Activated T-helper 1 cell treated with anti-CD3 and anti-CD28 coated beads, Interleukin-12 subunit alpha, Interleukin-12 subunit beta, Interleukin-2, Interleukin-4 antibody, amounts not matched to agents 30 ng/mL and 10 ng/mL and 1 ng/mL, durations not matched to agents 14 hours and 24 hours and 36 hours (primary cell): ENCODE measurements at regions of chr1 and their contacts with region 1.

Region 1: DNA sequence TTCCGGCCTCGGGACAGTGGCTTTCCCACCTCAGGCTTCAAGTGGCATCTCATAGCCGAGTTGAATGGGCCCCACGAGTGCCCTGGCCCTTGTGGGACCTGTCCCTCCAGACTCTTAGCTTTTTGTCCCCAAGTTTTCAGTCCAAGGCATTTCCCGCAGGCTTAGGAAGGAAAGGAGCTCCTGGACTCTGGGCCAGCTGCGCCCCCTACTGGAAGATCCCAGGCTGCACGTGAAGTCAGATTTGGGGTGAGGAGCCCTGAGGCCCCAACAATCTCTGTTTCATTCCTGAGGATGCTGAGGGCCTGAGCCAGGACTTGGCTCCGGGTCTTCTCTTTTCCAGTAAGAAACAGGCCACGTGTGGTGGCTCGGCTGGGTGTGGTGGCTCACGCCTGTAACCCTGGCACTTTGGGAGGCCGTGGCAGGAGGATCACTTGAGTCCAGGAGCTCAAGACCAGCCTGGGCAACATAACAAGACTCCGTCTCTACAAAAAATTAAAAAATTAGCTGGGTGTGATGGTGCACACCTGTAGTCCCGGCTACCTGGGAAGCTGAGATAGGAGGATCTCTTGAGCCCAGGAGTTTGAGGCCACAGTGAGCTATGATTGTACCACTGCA is 67.4 kb downstream of the ARHGEF10L start:
- DNase-seq: peak; percentile 13
- H3K4me3 Mint-ChIP-seq: no peak overlapping the region
- H3K27ac Mint-ChIP-seq: no peak overlapping the region
- H3K4me1 Mint-ChIP-seq: no peaks in the 10 kb centered on the region
- H3K27me3 Mint-ChIP-seq: no peaks in the 10 kb centered on the region

Region 2: DNA sequence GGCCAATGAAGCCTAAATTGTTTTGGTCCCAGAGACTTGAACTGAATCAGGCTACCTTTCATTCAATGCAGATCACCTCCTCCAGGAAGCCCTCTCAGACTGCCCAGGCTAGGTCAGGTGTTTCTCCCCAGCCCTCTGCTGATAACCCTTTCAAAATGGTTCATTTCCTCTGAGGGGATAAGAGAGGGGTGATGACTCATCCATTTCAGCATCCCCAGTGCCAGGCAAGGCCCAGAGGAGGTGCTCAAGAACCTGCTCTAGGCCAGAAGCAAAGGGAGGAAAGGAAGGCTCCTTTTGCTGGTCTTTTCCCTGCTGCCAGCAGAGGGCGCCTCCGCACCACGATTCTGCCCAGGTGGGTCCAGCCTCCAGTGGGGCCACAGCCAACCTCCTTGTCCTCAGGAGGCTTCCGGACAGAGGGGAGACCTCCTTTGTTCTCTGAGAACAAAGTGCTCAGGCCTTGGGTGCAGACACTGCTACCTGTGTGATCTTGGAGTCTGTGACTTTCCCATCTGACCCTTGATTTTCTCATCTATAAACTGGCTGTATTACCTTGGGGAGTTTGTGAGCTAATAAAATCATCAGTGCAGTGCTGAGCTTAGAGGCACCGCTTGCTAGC is 112.7 kb before region 1 on chr1:
- intact Hi-C with region 1: loop called (anchors 2 kb)
- DNase-seq: peak; percentile 45
- H3K4me3 Mint-ChIP-seq: no peak overlapping the region
- H3K27ac Mint-ChIP-seq: no peak overlapping the region
- H3K4me1 Mint-ChIP-seq: no peaks in the 10 kb centered on the region
- H3K27me3 Mint-ChIP-seq: no peaks in the 10 kb centered on the region

Region 3: DNA sequence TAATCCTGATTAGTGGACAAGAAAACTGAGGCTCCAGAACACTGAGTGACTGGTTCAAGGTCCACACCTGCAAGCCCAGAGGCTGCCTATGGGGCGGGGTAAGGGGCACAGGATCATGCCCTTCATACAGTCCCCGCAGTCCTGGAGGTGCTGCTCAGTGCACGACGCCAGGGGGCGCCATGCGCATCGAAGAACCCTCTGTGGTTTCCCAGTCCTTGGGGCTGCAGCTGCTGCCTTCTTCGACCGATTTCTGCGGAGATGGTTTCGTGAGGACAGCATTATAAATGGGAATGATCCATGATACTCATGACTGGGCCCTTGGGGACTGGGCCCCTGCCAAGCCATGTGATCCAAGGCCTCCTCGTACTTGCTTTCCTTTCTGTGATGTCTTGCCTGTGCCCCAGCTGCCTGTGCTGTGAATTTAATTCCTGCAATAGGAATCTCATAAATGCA is 104.6 kb before region 1 on chr1:
- intact Hi-C with region 1: loop called (anchors 1 kb)
- DNase-seq: peak; percentile 37
- H3K4me3 Mint-ChIP-seq: no peak overlapping the region
- H3K27ac Mint-ChIP-seq: no peak overlapping the region
- H3K4me1 Mint-ChIP-seq: no peaks in the 10 kb centered on the region
- H3K27me3 Mint-ChIP-seq: peaks cover 2% of the 10 kb centered on the region

Region 4: GRCh38 chr1:17540255-17541001 is 66.5 kb before region 1 on chr1:
- intact Hi-C with region 1: no loop called
- DNase-seq: no peak
- H3K4me3 Mint-ChIP-seq: no peak overlapping the region
- H3K27ac Mint-ChIP-seq: no peak overlapping the region
- H3K4me1 Mint-ChIP-seq: no peaks in the 10 kb centered on the region
- H3K27me3 Mint-ChIP-seq: peaks cover 41% of the 10 kb centered on the region

Region 5: GRCh38 chr1:17624611-17625233 is 17.8 kb after region 1 on chr1:
- intact Hi-C with region 1: no loop called
- DNase-seq: no peak
- H3K4me3 Mint-ChIP-seq: no peak overlapping the region
- H3K27ac Mint-ChIP-seq: no peak overlapping the region
- H3K4me1 Mint-ChIP-seq: no peaks in the 10 kb centered on the region
- H3K27me3 Mint-ChIP-seq: no peaks in the 10 kb centered on the region

Region 6: GRCh38 chr1:17878837-17879236 is 271.9 kb after region 1 on chr1:
- intact Hi-C with region 1: no loop called
- DNase-seq: no peak
- H3K4me3 Mint-ChIP-seq: no peak overlapping the region
- H3K27ac Mint-ChIP-seq: no peak overlapping the region
- H3K4me1 Mint-ChIP-seq: no peaks in the 10 kb centered on the region
- H3K27me3 Mint-ChIP-seq: no peaks in the 10 kb centered on the region